Mucosa of descending colon (tissue), 3 donors: ENCODE measurements at regions of chr1 and their contacts with region 1.

Region 1: DNA sequence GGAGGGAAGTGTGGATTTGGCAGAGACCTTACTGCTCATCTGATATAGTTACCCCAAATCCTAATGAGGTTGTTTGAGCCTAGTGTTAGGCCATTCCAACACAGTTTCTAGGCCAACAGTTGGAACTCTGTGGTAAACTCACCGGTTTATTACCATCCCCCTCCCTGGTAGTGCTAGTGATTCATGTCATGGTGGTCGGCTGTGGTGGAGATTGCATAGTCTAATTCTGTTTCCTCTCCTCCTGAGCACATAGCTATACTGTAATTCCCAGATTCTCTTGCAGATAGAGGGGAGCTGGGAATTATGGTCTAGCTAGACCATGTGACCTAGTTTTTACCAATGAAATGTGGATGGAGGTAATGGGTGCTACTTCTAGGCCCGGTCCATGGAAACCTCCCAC is 123.7 kb upstream of the KIF26B start:
- DNase-seq: no peak
- ATAC-seq: no peak
- H3K4me3 ChIP-seq: no peak overlapping the region
- H3K4me1 ChIP-seq: no peaks in the 10 kb centered on the region
- CTCF ChIP-seq: no peak

Region 2: DNA sequence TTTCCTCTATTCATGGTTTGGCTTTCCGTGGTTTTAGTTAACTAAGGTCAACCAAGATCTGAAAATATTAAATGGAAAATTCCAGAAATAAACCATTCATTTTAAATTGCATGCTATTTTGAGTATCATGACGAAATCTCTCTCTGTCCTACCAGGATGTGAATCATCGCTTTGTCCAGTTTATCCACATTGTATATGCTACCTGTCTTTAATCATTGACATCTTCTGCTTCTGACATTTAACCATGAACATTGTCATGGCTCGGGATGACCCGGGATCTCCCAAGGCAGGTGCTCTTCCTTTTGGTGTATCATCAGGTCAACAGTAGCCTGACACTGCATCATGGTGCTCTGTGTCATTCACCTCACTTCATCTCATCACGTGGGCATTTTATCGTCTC is 41.2 kb before region 1 on chr1:
- intact Hi-C with region 1: loop called in 1 of 2 experiments (anchors 10 kb)
- DNase-seq: no peak
- ATAC-seq: no peak
- H3K4me3 ChIP-seq: no peak overlapping the region
- H3K4me1 ChIP-seq: no peaks in the 10 kb centered on the region
- CTCF ChIP-seq: no peak